Common myeloid progenitor, CD34-positive (primary cell): ENCODE measurements at regions of chr18 and their contacts with region 1.

Region 1: GRCh38 chr18:25310045-25310444 is 41.9 kb downstream of the ZNF521 start:
- DNase-seq: peak; percentile 73 to 86 (median 85)
- H3K4me3 ChIP-seq: no peak overlapping the region
- H3K27ac ChIP-seq: peak overlapping the region in 1 of 2 experiments; percentile 5
- H3K4me1 ChIP-seq: peaks cover 0 to 45% (median 7%) of the 10 kb centered on the region in 4 experiments
- H3K27me3 ChIP-seq: no peaks in the 10 kb centered on the region

Region 2: DNA sequence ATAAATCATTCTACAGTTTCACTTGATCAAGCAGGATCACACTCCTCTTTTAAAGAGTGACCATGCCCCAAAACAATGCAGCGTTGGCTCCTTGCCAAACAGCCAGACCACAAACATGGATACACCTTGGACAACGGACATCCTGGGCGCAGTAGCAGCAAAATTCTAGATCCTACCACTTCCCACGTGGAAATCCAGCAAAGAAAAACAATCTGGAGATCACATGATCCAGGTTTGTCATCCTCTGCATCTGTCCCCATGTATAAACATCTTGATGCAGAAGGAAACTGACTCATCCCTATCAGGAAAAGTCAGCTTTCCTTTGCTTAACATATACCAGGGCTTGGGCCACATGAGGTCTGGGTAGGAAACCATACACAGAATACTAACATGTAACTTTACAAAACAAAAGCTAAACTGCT is 11.2 kb before region 1 on chr18:
- CTCF ChIA-PET with region 1: interaction called, 16 read pairs
- POLR2A ChIA-PET with region 1: interaction called, 3 read pairs
- DNase-seq: peak; percentile 93 to 98 (median 96)
- H3K4me3 ChIP-seq: peak overlapping the region in 3 of 7 experiments; percentile 11 to 52 (median 33)
- H3K27ac ChIP-seq: peak overlapping the region; percentile 95
- H3K4me1 ChIP-seq: peaks cover 4 to 39% (median 24%) of the 10 kb centered on the region in 4 experiments
- H3K27me3 ChIP-seq: no peaks in the 10 kb centered on the region

Region 3: GRCh38 chr18:25322806-25323205 is 12.8 kb after region 1 on chr18:
- CTCF ChIA-PET with region 1: interaction called, 16 read pairs
- POLR2A ChIA-PET with region 1: no interaction called
- DNase-seq: no peak
- H3K4me3 ChIP-seq: no peak overlapping the region
- H3K27ac ChIP-seq: no peak overlapping the region
- H3K4me1 ChIP-seq: peaks cover 0 to 13% (median 8%) of the 10 kb centered on the region in 4 experiments
- H3K27me3 ChIP-seq: no peaks in the 10 kb centered on the region